Sigmoid colon (tissue), 7 donors: ENCODE measurements at regions of chr12 and their contacts with region 1.

Region 1: DNA sequence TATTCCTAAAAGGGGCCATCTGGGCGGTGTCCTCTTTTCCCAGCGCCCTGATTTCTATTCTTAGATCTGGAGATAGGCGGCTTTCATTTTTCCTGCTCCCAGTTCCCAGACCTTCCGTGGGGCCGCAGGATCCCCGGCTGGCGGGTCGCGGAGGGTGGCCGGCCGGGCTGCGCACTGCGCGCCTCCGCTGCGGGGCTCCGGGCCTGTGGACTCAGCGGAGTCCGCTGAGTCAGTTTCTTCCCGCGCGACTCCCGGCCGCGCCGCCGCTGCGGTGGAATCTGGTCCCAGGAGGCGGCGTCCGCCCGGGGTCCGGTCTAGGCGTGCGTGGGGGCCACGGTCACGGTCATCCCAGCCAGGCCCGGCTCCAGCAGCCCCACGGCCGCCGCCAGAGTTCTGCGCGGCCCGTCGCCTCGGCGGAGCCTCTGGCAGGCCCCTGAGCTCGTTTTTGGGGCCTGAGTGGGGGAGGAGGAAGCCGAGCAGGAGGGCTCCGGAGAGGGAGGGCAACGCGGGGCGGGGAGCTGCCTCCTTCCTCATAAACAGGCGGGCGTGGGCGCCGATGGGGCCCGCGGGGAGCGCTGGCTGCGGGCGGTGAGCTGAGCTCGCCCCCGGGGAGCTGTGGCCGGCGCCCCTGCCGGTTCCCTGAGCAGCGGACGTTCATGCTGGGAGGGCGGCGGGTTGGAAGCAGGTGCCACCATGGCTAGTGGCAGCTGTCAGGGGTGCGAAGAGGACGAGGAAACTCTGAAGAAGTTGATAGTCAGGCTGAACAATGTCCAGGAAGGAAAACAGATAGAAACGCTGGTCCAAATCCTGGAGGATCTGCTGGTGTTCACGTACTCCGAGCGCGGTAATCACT is at the start of gene LRRK2:
- DNase-seq: peak; percentile 94
- H3K4me3 ChIP-seq: peak within 1 kb of the TSS; percentile 62 to 84 (median 74)
- H3K27ac ChIP-seq: peak within 1 kb of the TSS; percentile 90 to 98 (median 94)
- H3K4me1 ChIP-seq: peaks cover 0 to 33% (median 22%) of the 10 kb centered on the region in 4 donors
- H3K27me3 ChIP-seq: no peaks in the 10 kb centered on the region
- CTCF ChIP-seq: no peak
- EP300 ChIP-seq: peak in 1 of 4 donors; percentile 28
- POLR2A ChIP-seq: peak; percentile 48 to 66
- total RNA-seq, gene LRRK2: 18.7 to 29.9 (median 25.4) TPM

Region 2: DNA sequence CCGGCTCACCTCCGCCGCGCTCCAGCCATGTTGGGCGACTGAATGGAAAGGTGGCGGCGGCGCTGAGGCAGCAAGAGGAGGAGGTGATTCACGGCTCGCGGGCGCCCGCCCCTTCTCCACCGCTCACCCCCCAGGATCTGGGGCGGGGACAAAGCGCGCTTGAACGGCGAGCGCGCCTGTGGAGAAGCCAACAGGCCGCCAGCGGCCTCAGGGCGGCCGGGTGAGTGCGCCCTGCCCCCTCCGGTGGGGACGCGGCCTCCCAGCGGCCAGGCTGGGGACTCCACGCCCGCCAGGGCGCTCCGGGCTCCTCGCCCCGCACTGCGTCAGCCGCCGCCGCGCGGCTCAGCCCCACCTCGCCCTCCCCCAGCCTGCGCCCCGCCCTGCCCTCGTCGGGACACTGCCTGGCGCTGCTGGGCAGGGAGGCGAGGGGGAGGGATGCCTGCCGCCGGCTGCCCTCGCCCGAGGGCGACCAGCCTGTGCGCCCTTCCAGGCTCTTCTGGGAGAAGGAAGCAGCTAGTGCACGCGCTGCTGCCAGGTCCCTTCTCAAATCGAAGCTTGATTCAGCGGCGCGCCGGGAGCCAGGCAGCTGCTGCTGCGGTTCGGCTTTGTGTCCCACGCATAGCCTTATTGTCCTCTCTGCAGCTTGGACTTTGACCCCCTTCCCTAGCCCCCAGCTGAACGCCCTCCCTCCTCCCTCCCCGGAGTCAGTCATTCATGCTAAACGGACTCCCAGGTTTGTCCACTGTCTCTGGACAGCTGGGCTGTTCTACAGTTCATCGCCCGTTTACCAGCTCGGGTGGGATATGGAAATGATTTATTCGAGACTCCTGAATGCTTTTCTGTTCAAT is 781.4 kb before region 1 on chr12 and contains the start of gene KIF21A:
- intact Hi-C with region 1: loop called (anchors 10 kb)
- DNase-seq: peak; percentile 92
- H3K4me3 ChIP-seq: peak within 1 kb of the TSS; percentile 61 to 85 (median 73)
- H3K27ac ChIP-seq: peak within 1 kb of the TSS; percentile 82 to 90 (median 84)
- H3K4me1 ChIP-seq: peaks cover 0 to 18% (median 10%) of the 10 kb centered on the region in 4 donors
- H3K27me3 ChIP-seq: no peaks in the 10 kb centered on the region
- CTCF ChIP-seq: peak; percentile 6 to 74 (median 20)
- EP300 ChIP-seq: no peak
- POLR2A ChIP-seq: peak in 1 of 2 donors; percentile 28
- total RNA-seq, gene KIF21A: 12.0 to 23.9 (median 17.3) TPM

Region 3: GRCh38 chr12:39764944-39765560 is 459.6 kb before region 1 on chr12:
- intact Hi-C with region 1: loop called (anchors 10 kb)
- DNase-seq: no peak
- H3K4me3 ChIP-seq: no peak overlapping the region
- H3K27ac ChIP-seq: no peak overlapping the region
- H3K4me1 ChIP-seq: peaks cover 0 to 6% (median 0%) of the 10 kb centered on the region in 4 donors
- H3K27me3 ChIP-seq: no peaks in the 10 kb centered on the region
- CTCF ChIP-seq: peak; percentile 64 to 81 (median 74)
- EP300 ChIP-seq: no peak
- POLR2A ChIP-seq: no peak

Region 4: DNA sequence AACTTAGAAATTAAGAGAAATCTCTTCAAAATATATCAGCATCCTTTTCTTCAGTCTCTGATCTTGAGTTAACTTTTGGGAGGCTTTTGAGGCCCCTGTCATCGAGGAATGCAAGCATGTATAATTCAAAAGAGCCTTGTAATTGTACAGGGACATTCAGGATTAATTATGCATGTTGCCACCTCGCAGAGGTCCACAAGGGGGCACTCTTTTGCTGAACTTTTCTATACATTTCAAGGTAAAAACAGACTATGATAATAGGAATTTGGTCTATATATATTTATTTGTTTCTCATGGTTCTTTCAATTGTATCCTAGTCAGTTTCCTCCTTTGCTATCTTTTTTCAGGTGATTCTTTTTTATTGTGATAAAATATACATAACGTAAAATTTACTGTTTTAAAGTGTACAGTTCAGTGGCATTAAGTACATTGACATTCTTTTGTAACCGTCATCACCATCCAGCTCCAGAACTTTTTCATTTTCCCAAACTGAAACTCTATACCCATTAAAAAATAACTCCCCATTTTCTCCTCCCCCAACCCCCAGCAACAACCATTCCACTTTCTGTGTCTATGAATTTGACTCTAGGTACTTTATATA is 71.8 kb before region 1 on chr12:
- intact Hi-C with region 1: loop called (anchors 2 kb)
- DNase-seq: peak; percentile 68
- H3K4me3 ChIP-seq: no peak overlapping the region
- H3K27ac ChIP-seq: no peak overlapping the region
- H3K4me1 ChIP-seq: no peaks in the 10 kb centered on the region
- H3K27me3 ChIP-seq: no peaks in the 10 kb centered on the region
- CTCF ChIP-seq: peak in 3 of 4 experiments; percentile 53 to 88 (median 67)
- EP300 ChIP-seq: no peak
- POLR2A ChIP-seq: no peak